HepG2 (cell line): ENCODE measurements at regions of chr2 and their contacts with region 1.

Region 1: GRCh38 chr2:232292395-232293154 is 86.0 kb upstream of the ALPP start:
- DNase-seq: peak; percentile 58
- ATAC-seq: peak; percentile 90
- H3K4me3 ChIP-seq: no peak overlapping the region
- H3K27ac ChIP-seq: no peak overlapping the region
- H3K4me1 ChIP-seq: peaks cover 4% of the 10 kb centered on the region; the same call in 1 of the 2 replicates
- H3K27me3 ChIP-seq: no peaks in the 10 kb centered on the region
- CTCF ChIP-seq: peak; percentile 76
- EP300 ChIP-seq: no peak
- POLR2A ChIP-seq: no peak
- RAD21 ChIP-seq: peak; percentile 41

Region 2: GRCh38 chr2:232117413-232117812 is 175.2 kb before region 1 on chr2:
- CTCF ChIA-PET with region 1: no interaction called
- POLR2A ChIA-PET with region 1: no interaction called
- in situ Hi-C with region 1: no loop called
- intact Hi-C with region 1: loop called (anchors 1 kb)
- DNase-seq: peak; percentile 72
- ATAC-seq: peak; percentile 99
- H3K4me3 ChIP-seq: no peak overlapping the region
- H3K27ac ChIP-seq: no peak overlapping the region
- H3K4me1 ChIP-seq: peaks cover 13% of the 10 kb centered on the region
- H3K27me3 ChIP-seq: no peaks in the 10 kb centered on the region
- CTCF ChIP-seq: peak; percentile 81
- EP300 ChIP-seq: no peak
- POLR2A ChIP-seq: no peak
- RAD21 ChIP-seq: peak; percentile 81